Caco-2 (cell line): ENCODE measurements at regions of chr6 and their contacts with region 1.

Region 1: GRCh38 chr6:64084185-64084663 is 448.6 kb downstream of the PHF3 start:
- DNase-seq: peak; percentile 70 to 79
- H3K4me3 ChIP-seq: no peak overlapping the region
- H3K4me3 Mint-ChIP-seq: no peak overlapping the region
- H3K27ac Mint-ChIP-seq: peak overlapping the region; percentile 15
- H3K4me1 ChIP-seq: peaks cover 24% of the 10 kb centered on the region
- H3K4me1 Mint-ChIP-seq: peaks cover 26% of the 10 kb centered on the region
- H3K27me3 ChIP-seq: no peaks in the 10 kb centered on the region
- H3K27me3 Mint-ChIP-seq: no peaks in the 10 kb centered on the region
- CTCF ChIP-seq: peak; percentile 15 to 55

Region 2: GRCh38 chr6:63764318-63764916 is 319.8 kb before region 1 on chr6:
- CTCF ChIA-PET with region 1: no interaction called
- POLR2A ChIA-PET with region 1: no interaction called
- intact Hi-C with region 1: no loop called
- DNase-seq: peak in 1 of 2 experiments; percentile 36
- H3K4me3 ChIP-seq: no peak overlapping the region
- H3K4me3 Mint-ChIP-seq: no peak overlapping the region
- H3K27ac Mint-ChIP-seq: no peak overlapping the region
- H3K4me1 ChIP-seq: no peaks in the 10 kb centered on the region
- H3K4me1 Mint-ChIP-seq: no peaks in the 10 kb centered on the region
- H3K27me3 ChIP-seq: no peaks in the 10 kb centered on the region
- H3K27me3 Mint-ChIP-seq: no peaks in the 10 kb centered on the region
- CTCF ChIP-seq: peak; percentile 29 to 44

Region 3: GRCh38 chr6:63774961-63775360 is 309.3 kb before region 1 on chr6:
- CTCF ChIA-PET with region 1: no interaction called
- POLR2A ChIA-PET with region 1: no interaction called
- intact Hi-C with region 1: no loop called
- DNase-seq: no peak
- H3K4me3 ChIP-seq: no peak overlapping the region
- H3K4me3 Mint-ChIP-seq: no peak overlapping the region
- H3K27ac Mint-ChIP-seq: no peak overlapping the region
- H3K4me1 ChIP-seq: no peaks in the 10 kb centered on the region
- H3K4me1 Mint-ChIP-seq: no peaks in the 10 kb centered on the region
- H3K27me3 ChIP-seq: no peaks in the 10 kb centered on the region
- H3K27me3 Mint-ChIP-seq: peaks cover 2% of the 10 kb centered on the region
- CTCF ChIP-seq: no peak

Region 4: DNA sequence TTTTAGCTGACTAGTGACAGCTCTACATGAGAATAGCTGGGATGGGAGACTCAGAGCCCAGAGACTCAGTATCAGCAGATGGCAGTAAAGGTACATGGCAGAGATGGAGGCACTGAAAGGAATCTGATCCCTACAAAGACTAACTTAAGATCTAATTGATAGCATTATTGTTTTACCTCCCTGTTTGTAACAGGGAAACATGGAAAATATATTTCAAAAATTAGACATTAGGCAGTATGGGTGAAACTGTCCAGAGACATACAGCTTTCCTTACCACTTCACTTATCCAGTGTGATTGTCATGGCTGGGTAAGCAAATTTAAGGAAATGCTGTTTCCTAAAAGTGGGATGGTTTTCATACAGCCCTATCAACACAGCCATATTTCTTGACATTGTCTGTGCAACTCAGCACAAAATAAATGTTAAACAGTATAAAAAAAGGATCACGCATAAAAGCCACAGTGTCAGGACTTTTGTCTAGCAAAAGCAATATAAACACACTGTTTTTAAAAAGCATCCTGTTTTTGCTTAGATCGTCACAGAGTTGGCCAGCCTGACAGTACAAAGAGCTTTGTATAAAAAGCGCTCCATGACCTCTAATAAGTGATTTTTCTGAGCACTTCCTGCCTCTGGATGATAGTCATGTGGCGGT is 71.7 kb before region 1 on chr6:
- CTCF ChIA-PET with region 1: interaction called, 4 read pairs
- POLR2A ChIA-PET with region 1: no interaction called
- intact Hi-C with region 1: loop called (anchors 1 kb)
- DNase-seq: peak; percentile 50 to 64
- H3K4me3 ChIP-seq: no peak overlapping the region
- H3K4me3 Mint-ChIP-seq: no peak overlapping the region
- H3K27ac Mint-ChIP-seq: no peak overlapping the region
- H3K4me1 ChIP-seq: 0 out of 2 replicates have a peak, but pooled peaks cover 5% of the 10 kb centered on the region
- H3K4me1 Mint-ChIP-seq: no peaks in the 10 kb centered on the region
- H3K27me3 ChIP-seq: no peaks in the 10 kb centered on the region
- H3K27me3 Mint-ChIP-seq: no peaks in the 10 kb centered on the region
- CTCF ChIP-seq: peak; percentile 74 to 88

Region 5: GRCh38 chr6:64046746-64047208 is 37.4 kb before region 1 on chr6:
- CTCF ChIA-PET with region 1: no interaction called
- POLR2A ChIA-PET with region 1: no interaction called
- intact Hi-C with region 1: loop called (anchors 2 kb)
- DNase-seq: no peak
- H3K4me3 ChIP-seq: no peak overlapping the region
- H3K4me3 Mint-ChIP-seq: no peak overlapping the region
- H3K27ac Mint-ChIP-seq: no peak overlapping the region
- H3K4me1 ChIP-seq: peaks cover 12% of the 10 kb centered on the region
- H3K4me1 Mint-ChIP-seq: peaks cover 17% of the 10 kb centered on the region
- H3K27me3 ChIP-seq: no peaks in the 10 kb centered on the region
- H3K27me3 Mint-ChIP-seq: no peaks in the 10 kb centered on the region
- CTCF ChIP-seq: no peak

Region 6: GRCh38 chr6:64230530-64230929 is 146.3 kb after region 1 on chr6:
- CTCF ChIA-PET with region 1: no interaction called
- POLR2A ChIA-PET with region 1: no interaction called
- intact Hi-C with region 1: no loop called
- DNase-seq: no peak
- H3K4me3 ChIP-seq: no peak overlapping the region
- H3K4me3 Mint-ChIP-seq: no peak overlapping the region
- H3K27ac Mint-ChIP-seq: no peak overlapping the region
- H3K4me1 ChIP-seq: no peaks in the 10 kb centered on the region
- H3K4me1 Mint-ChIP-seq: no peaks in the 10 kb centered on the region
- H3K27me3 ChIP-seq: no peaks in the 10 kb centered on the region
- H3K27me3 Mint-ChIP-seq: no peaks in the 10 kb centered on the region
- CTCF ChIP-seq: no peak

Region 7: GRCh38 chr6:64258752-64259151 is 174.5 kb after region 1 on chr6:
- CTCF ChIA-PET with region 1: interaction called, 5 read pairs
- POLR2A ChIA-PET with region 1: no interaction called
- intact Hi-C with region 1: loop called (anchors 1 kb)
- DNase-seq: peak; percentile 56 to 72
- H3K4me3 ChIP-seq: no peak overlapping the region
- H3K4me3 Mint-ChIP-seq: peak overlapping the region; percentile 46
- H3K27ac Mint-ChIP-seq: peak overlapping the region; percentile 10
- H3K4me1 ChIP-seq: peaks cover 46% of the 10 kb centered on the region
- H3K4me1 Mint-ChIP-seq: peaks cover 53% of the 10 kb centered on the region
- H3K27me3 ChIP-seq: no peaks in the 10 kb centered on the region
- H3K27me3 Mint-ChIP-seq: no peaks in the 10 kb centered on the region
- CTCF ChIP-seq: no peak

Region 8: DNA sequence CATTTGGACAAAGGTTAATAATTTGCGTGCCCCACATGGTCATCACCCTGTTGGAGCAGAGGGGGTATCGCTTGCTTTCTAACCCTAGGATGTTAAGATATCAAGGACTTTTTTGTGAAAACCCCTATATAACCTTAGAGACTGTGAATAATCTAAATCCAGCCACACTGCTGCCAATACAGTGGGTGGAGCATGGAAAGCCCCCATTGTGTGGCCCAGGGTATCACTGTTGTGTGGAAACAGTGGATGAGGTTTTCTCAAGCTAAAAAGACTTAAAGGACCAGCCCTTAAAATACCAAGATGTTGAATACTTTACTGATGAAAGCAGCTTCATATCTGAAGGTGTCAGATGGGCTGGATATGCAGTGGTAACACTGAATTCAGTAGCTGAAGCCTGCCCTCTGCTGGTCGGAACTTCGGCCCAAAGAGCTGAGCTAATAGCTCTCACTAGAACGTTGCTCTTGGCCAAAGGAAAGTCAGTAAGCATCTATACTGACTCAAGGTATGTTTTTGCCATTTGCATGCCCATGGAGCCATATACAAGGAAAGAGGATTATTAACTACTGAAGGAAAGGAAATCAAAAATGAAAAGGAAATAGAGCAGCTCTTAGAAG is 246.6 kb after region 1 on chr6:
- CTCF ChIA-PET with region 1: no interaction called
- POLR2A ChIA-PET with region 1: no interaction called
- intact Hi-C with region 1: loop called (anchors 1 kb)
- DNase-seq: peak; percentile 80 to 84
- H3K4me3 ChIP-seq: no peak overlapping the region
- H3K4me3 Mint-ChIP-seq: no peak overlapping the region
- H3K27ac Mint-ChIP-seq: no peak overlapping the region
- H3K4me1 ChIP-seq: no peaks in the 10 kb centered on the region; the same call in 1 of the 2 replicates
- H3K4me1 Mint-ChIP-seq: peaks cover 6% of the 10 kb centered on the region
- H3K27me3 ChIP-seq: no peaks in the 10 kb centered on the region
- H3K27me3 Mint-ChIP-seq: no peaks in the 10 kb centered on the region
- CTCF ChIP-seq: peak; percentile 70 to 78

Region 9: GRCh38 chr6:64630901-64631300 is 546.7 kb after region 1 on chr6:
- CTCF ChIA-PET with region 1: no interaction called
- POLR2A ChIA-PET with region 1: no interaction called
- intact Hi-C with region 1: no loop called
- DNase-seq: no peak
- H3K4me3 ChIP-seq: no peak overlapping the region
- H3K4me3 Mint-ChIP-seq: no peak overlapping the region
- H3K27ac Mint-ChIP-seq: no peak overlapping the region
- H3K4me1 ChIP-seq: no peaks in the 10 kb centered on the region
- H3K4me1 Mint-ChIP-seq: no peaks in the 10 kb centered on the region
- H3K27me3 ChIP-seq: no peaks in the 10 kb centered on the region
- H3K27me3 Mint-ChIP-seq: no peaks in the 10 kb centered on the region
- CTCF ChIP-seq: no peak